ENCODE measurements at regions of chr18 and their contacts with region 1.

Region 1: DNA sequence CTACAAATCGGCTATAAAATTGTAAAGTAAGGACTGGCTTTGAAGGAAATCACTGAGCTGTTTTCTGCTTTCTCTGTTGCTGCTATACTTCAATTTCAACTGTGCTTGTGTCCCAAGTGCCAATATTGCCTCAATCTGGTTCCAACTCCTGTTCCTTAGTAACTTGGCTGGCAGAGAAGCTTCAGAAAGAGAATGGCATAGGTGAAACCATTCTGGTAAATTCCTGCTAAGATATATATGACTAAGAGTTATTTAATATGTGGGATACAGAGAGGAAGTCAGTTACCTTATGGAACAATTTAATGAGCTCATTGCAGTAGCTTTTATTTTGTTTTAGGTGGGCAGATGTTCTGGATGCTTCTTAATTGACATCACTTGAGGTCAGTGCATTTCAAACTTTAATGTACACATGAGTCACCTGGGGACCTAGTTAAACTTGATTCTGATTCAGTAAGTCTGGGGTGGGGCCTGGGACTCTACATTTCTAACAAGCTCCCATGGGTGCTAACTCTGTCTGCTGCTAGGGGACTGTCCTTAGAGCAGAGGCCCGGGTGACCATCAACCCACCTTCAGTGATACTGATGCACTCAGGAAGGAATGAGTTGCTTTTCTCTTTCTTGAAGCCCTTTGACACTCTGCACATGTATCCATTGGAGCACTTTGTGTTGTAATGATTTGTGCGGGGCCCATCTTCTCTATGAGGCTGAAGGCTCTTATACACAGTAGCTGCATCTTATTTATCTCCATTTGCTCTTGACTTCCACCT is 47.6 kb downstream of the LIPG start:
- DNase-seq: no peak
- ATAC-seq: no peak
- H3K4me3 ChIP-seq: no peak overlapping the region
- H3K27ac ChIP-seq: no peak overlapping the region
- H3K4me1 ChIP-seq: no peaks in the 10 kb centered on the region
- H3K27me3 ChIP-seq: no peaks in the 10 kb centered on the region
- CTCF ChIP-seq: no peak

Region 2: GRCh38 chr18:49274188-49274714 is 335.2 kb before region 1 on chr18:
- intact Hi-C with region 1: no loop called
- DNase-seq: no peak
- ATAC-seq: no peak
- H3K4me3 ChIP-seq: no peak overlapping the region
- H3K27ac ChIP-seq: no peak overlapping the region
- H3K4me1 ChIP-seq: no peaks in the 10 kb centered on the region
- H3K27me3 ChIP-seq: no peaks in the 10 kb centered on the region
- CTCF ChIP-seq: no peak

Region 3: DNA sequence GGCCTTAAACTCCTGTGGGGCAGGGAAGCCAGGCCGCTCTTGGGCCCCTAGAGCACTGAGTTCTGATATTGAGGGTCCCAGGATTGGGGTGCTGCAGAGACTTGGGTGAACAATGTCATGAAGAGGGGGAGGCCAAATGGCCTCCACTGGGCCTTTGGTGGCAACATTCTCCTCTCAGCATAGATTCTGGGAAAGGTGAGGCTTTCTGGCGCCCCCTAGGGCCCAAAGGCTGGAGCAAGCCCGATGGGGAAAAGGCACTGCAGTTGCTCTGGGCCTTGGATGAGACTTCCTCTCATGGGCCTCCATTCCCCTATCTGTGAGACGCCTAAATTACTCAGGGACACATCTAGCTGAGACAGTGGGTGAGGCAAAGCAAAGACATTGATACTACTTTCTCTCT is 119.1 kb after region 1 on chr18:
- intact Hi-C with region 1: loop called in 1 of 2 experiments (anchors 10 kb)
- DNase-seq: peak; percentile 26 to 53
- ATAC-seq: peak in 2 of 4 donors; percentile 44 to 49
- H3K4me3 ChIP-seq: no peak overlapping the region
- H3K27ac ChIP-seq: no peak overlapping the region
- H3K4me1 ChIP-seq: no peaks in the 10 kb centered on the region
- H3K27me3 ChIP-seq: no peaks in the 10 kb centered on the region
- CTCF ChIP-seq: peak; percentile 57